ENCODE measurements at regions of chr1 and their contacts with region 1.

Region 1: GRCh38 chr1:198265073-198265661 is 108.4 kb downstream of the NEK7 start:
- DNase-seq: no peak
- ATAC-seq: peak; percentile 95

Region 2: GRCh38 chr1:198167436-198167934 is 97.7 kb before region 1 on chr1:
- intact Hi-C with region 1: loop called (anchors 5 kb)
- DNase-seq: no peak
- ATAC-seq: peak; percentile 80

Measured in Right ventricle myocardium superior (tissue), 1 donor.